Ovary (tissue), 10 donors: ENCODE measurements at regions of chr7 and their contacts with region 1.

Region 1: GRCh38 chr7:66493235-66494181 is 135.2 kb upstream of the KCTD7 start:
- DNase-seq: peak; percentile 98 to 99 (median 98)
- H3K4me3 ChIP-seq: peak overlapping the region; percentile 84
- H3K27ac ChIP-seq: peak overlapping the region; percentile 87 to 95
- H3K4me1 ChIP-seq: peaks cover 6% of the 10 kb centered on the region
- H3K27me3 ChIP-seq: no peaks in the 10 kb centered on the region
- CTCF ChIP-seq: peak in 2 of 3 donors; percentile 42 to 57
- EP300 ChIP-seq: peak; percentile 62
- POLR2A ChIP-seq: peak; percentile 98

Region 2: DNA sequence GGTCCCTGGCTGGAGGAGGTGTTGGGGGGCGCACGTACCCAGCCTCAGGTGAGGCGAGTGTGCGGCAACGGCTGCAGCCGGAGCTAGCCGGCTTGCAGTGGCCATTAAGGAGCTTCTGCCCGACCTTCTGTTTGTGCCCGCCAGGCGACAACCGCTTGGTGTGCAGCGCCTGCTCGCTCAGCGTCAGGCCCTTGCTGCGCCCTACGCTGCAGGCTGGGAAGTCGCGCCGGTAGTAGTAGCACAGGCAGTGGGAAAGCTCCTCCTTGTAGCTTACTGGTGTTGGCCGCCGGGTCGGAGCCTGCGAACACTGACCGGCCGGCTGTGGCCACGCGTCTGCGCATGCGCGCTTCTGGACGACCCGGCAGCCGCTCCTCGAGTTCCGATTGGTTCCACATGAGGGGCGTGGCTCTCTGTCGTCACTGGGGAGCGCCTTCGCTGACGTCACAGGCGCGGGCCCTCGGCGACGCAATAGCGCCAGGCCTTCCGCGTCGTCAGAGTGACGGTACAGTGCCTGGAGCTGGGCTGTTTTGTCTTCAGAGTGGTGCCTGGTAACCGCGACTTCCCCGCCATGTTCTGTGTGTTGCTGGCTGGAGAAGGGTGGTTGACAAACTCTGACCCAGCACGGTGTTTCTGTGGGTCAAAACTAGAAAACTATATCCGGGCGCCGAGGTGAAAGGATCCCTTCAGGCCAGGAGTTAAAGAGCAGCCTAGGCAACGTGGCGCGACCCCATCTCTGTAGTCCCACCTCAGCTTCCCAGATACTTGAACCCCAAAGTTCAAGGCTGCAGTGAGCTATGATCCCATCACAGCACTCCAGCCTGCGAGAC is 351.3 kb after region 1 on chr7:
- intact Hi-C with region 1: loop called in 1 of 4 experiments (anchors 5 kb)
- DNase-seq: peak; percentile 99 to 100 (median 99)
- H3K4me3 ChIP-seq: peak overlapping the region; percentile 79
- H3K27ac ChIP-seq: peak overlapping the region; percentile 50 to 86
- H3K4me1 ChIP-seq: peaks cover 3% of the 10 kb centered on the region
- H3K27me3 ChIP-seq: no peaks in the 10 kb centered on the region
- CTCF ChIP-seq: peak in 2 of 3 donors; percentile 44 to 48
- EP300 ChIP-seq: peak; percentile 86
- POLR2A ChIP-seq: peak; percentile 99